ENCODE measurements at regions of chr16 and their contacts with region 1.

Region 1: GRCh38 chr16:2047330-2048115 is at the starts of genes NTHL1 and TSC2:
- DNase-seq: peak; percentile 91 to 93 (median 93)
- H3K4me3 ChIP-seq: peak within 1 kb of the TSS; percentile 66 to 96 (median 82)
- H3K4me3 Mint-ChIP-seq: peak within 1 kb of the TSS; percentile 90 to 93
- H3K27ac ChIP-seq: peak within 1 kb of the TSS in 1 of 2 donors; percentile 77
- H3K27ac Mint-ChIP-seq: peak within 1 kb of the TSS; percentile 38 to 92 (median 82)
- H3K4me1 ChIP-seq: peaks cover 26 to 37% of the 10 kb centered on the region in 2 donors
- H3K4me1 Mint-ChIP-seq: peaks cover 27% of the 10 kb centered on the region
- H3K27me3 ChIP-seq: no peaks in the 10 kb centered on the region
- H3K27me3 Mint-ChIP-seq: peaks cover 0 to 2% (median 0%) of the 10 kb centered on the region in 3 donors
- CTCF ChIP-seq: peak; percentile 56
- polyA plus RNA-seq, gene NTHL1: 9.2 to 22.4 (median 9.6) TPM
- polyA plus RNA-seq, gene TSC2: 11.7 to 95.1 (median 20.8) TPM

Region 2: DNA sequence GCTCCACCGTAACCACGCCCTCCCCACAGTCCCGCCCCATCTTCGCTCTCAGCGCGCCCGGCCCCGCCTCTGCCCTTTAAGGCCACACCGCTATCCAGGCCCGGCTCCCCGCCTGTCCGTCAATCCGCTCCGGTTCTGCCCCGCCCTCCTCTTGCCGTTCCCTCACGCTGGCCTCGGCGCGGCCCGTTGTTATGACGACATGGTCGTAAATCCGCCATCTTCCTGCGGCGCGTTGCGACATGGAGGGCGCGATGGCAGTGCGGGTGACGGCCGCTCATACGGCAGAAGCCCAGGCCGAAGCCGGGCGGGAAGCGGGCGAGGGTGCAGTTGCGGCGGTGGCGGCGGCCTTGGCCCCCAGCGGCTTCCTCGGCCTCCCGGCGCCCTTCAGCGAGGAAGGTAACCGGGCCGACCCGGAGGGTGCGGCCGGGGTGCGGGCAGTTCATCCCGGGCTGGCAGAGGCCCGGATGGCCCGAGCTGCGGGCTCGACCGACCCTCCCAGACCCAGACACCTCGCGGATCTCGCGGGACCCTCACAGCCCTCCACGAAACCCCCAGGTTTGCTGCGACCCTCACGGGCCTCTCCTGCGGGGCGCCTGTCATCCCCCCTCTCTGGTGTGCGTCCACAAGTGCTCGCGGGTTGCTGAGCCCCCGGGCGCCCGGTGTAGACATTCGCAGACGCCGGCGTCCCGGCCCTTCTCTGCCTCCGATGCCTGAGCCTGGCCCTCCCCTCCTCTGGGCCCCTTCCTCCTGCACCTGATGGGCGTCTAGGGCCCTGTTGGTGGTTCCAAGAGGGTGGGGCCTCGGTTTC is 176.1 kb after region 1 on chr16 and contains the start of gene E4F1:
- intact Hi-C with region 1: loop called in 1 of 2 experiments (anchors 5 kb)
- DNase-seq: peak; percentile 98 to 100 (median 100)
- H3K4me3 ChIP-seq: peak within 1 kb of the TSS; percentile 64 to 95 (median 83)
- H3K4me3 Mint-ChIP-seq: peak within 1 kb of the TSS; percentile 75 to 86
- H3K27ac ChIP-seq: peak within 1 kb of the TSS; percentile 60 to 87
- H3K27ac Mint-ChIP-seq: peak within 1 kb of the TSS; percentile 46 to 86 (median 77)
- H3K4me1 ChIP-seq: peaks cover 13 to 17% of the 10 kb centered on the region in 2 donors
- H3K4me1 Mint-ChIP-seq: peaks cover 22% of the 10 kb centered on the region
- H3K27me3 ChIP-seq: no peaks in the 10 kb centered on the region
- H3K27me3 Mint-ChIP-seq: peaks cover 0 to 3% (median 1%) of the 10 kb centered on the region in 3 donors
- CTCF ChIP-seq: no peak
- polyA plus RNA-seq, gene E4F1: 4.9 to 50.9 (median 5.8) TPM

Measured in CD14-positive monocyte (primary cell).